ENCODE measurements at regions of chr2 and their contacts with region 1.

Region 1: GRCh38 chr2:215299337-215299859 is 12.5 kb upstream of the ATIC start:
- DNase-seq: no peak
- H3K4me3 ChIP-seq: no peak overlapping the region
- H3K27ac ChIP-seq: no peak overlapping the region
- H3K27me3 ChIP-seq: no peaks in the 10 kb centered on the region
- CTCF ChIP-seq: no peak

Region 2: DNA sequence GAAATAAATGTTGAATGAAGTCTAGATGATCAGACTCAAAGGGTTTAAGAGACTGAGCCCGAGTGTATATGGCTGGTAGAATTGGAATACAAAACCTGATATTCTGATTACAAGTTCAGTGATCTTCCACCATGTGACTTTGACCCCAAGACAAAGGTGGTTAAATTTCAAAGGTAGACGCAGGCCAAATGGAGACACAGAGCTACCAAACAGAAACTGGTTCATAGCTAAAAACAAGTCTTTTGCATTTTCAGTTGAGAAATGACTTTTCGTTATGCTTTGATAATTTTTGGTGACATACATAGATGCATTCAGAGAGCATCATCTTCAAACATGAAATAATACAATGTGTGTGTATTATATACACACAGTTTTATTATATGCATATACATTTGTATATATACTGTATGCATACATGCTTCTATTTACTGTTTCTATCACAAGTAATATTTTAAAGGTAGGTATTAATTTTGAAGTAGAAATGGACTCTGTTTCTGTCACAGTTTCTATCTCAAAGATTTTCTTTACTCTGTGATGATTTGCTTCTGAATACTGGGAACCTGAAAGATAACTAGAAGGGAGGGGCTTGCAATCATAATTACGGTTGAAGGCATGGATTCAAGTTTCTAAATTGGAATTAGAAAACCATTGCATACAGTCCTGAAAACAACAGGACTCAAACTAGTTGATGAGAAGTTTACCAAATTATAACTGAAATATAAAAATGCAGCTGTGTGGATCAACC is 303.3 kb before region 1 on chr2:
- CTCF ChIA-PET with region 1: no interaction called
- POLR2A ChIA-PET with region 1: no interaction called
- DNase-seq: no peak
- H3K4me3 ChIP-seq: no peak overlapping the region
- H3K27ac ChIP-seq: no peak overlapping the region
- H3K27me3 ChIP-seq: no peaks in the 10 kb centered on the region
- CTCF ChIP-seq: no peak

Region 3: DNA sequence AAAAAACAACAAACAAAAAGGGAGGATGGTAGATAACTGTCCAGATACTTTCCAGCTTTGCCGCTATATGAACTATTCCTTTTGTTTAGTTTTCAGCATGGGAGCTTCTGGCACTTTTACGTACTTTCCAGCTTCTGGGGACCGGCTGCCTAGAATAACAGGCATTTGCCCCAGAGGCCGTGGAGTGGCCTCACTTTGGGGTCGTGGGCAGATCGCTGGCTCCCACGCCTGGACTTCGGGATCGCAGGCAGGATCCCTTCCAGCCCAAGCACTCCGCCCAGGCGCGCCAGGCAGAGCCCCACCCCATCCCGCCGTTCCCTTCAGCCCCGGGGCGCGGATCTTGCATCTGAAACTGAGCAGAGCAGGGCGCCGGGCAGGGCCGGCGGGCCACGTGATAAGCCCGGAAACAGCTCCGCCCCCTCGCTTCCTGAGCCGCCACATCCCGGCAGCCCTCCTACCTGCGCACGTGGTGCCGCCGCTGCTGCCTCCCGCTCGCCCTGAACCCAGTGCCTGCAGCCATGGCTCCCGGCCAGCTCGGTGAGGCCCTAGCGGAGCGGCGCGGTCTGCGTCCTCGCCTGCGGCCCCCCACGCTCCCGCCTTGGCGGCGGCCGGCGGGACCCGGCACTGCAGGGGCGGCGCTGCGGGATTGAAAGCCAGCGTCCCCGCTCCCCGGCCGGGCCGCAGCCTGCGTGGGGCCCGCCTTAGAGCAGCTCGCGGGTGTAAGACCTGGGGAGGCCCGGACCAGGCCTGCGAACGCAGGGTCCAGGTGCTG is 12.4 kb after region 1 on chr2 and contains the start of gene ATIC:
- CTCF ChIA-PET with region 1: interaction called, 3 read pairs
- POLR2A ChIA-PET with region 1: interaction called, 11 read pairs
- DNase-seq: peak; percentile 71
- H3K4me3 ChIP-seq: peak within 1 kb of the TSS; percentile 84
- H3K27ac ChIP-seq: peak within 1 kb of the TSS; percentile 70
- H3K27me3 ChIP-seq: no peaks in the 10 kb centered on the region
- CTCF ChIP-seq: no peak
- polyA plus RNA-seq, gene ATIC: 114 TPM in 2 replicates

Measured in AG04450 (cell line).